Left colon (tissue), 2 donors: ENCODE measurements at regions of chr2 and their contacts with region 1.

Region 1: DNA sequence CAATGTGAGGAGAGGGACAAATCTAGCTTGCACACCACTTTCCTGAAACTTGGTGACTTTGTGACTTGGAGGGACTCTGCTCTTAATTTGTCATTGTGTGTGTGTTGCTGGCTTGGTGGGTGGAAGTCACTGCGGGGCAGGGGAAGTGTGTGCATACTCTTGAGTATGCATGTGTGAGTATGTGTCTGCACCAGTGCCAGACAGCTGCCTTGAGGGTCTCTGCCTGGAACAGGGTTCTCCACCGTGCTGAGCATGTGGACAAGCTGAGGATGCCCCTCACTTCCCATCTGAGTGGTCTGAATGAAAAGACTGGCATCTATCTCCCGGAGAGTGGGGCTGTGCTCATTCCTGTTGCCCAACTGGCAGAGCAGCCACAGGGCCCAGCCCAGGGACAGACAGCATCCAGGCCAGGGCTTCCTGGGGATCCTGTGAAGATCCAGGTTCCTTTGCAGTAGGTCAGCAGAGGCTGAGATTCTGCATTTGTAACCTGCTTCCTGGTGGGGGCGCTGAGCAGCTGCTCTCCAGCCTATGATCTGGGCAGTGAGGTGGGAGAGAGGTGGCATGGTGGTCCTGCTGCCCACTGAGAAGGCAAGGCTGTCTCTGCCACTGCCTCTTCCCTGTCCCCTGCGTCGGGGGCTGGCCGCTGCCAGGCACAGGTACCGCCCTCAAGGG is 138.9 kb upstream of the HAAO start:
- DNase-seq: peak in 1 of 2 donors; percentile 46
- ATAC-seq: peak; percentile 16

Region 2: DNA sequence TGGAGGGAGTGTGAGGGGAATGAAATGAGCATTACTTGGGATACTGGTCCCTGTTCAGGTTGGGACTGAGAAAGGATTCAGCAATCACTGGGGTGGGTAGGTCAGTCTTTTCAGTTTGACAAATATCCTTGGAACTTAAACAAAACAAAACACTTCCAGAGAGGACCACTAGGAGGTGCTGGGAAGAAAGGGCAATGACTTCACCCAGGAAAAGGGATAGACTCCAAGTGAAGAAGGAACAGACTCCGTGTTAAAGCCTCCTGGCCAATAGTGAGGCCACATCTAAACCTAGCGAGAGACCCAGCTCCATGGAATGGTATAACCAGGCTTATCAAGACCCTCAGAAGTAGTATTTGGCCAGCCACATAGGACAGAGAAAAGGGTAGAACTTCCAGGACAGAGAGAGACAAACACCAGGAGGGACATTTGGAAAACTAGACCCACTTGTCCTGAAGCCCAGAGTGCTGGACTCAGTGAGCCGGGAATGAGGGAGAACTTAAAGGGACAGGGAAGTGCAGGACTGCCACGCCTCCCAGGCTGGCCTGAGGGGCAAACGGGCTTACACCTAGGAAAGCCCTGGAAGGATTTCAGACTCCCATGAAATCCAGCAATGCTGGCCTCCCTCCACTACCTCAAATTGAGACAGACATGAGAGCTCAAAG is 417.9 kb before region 1 on chr2:
- intact Hi-C with region 1: no loop called
- DNase-seq: peak; percentile 26 to 28
- ATAC-seq: peak; percentile 95

Region 3: GRCh38 chr2:42835577-42836371 is 95.5 kb before region 1 on chr2:
- intact Hi-C with region 1: loop called (anchors 10 kb)
- DNase-seq: peak in 1 of 2 donors; percentile 37
- ATAC-seq: peak; percentile 6

Region 4: DNA sequence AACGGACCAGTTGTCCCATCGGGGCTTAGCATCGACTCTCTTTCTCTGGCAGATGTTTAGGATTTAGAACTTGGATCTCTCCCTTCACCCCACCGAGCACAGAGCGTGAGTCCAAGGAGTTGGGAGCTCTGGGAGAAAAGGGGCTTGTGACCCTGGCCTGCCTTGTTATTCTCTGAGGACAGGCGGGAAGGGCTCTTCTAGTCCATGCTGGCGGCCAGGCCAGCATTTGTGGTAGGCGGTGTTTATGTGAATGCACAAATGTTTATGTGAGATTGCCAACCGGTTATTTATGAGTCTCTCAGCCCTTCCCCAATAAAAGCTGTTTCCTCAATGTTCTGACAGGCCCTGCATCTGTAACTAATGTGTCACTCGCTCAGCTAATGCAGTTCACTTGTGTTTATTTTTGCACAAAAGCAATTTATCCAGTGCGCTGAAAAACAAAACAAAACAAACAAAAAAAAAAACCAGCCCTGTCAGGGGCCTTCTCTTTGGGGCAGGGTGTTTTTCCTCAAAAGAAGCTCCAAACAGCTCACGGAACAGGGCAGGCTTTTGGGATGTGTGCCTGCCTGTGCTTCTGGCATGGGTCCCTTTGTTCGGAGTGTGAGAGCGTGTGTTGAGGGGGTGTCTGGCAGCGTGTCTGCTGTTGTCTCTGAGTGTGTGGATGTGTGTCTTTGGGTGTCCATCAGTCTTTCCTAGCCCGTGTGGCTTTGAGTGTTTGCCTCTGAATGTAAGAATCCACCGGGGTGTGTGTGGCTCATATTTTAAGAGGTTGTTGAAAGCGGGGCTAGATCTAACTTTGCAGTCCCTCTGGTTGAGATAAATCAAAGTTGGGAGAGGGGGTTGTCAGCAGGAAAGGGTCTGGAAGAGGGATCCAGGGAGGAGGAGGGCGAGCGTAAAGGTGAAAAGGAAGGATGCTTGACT is 86.1 kb before region 1 on chr2:
- intact Hi-C with region 1: loop called in 1 of 2 experiments (anchors 10 kb)
- DNase-seq: peak; percentile 34 to 67
- ATAC-seq: peak; percentile 46

Region 5: DNA sequence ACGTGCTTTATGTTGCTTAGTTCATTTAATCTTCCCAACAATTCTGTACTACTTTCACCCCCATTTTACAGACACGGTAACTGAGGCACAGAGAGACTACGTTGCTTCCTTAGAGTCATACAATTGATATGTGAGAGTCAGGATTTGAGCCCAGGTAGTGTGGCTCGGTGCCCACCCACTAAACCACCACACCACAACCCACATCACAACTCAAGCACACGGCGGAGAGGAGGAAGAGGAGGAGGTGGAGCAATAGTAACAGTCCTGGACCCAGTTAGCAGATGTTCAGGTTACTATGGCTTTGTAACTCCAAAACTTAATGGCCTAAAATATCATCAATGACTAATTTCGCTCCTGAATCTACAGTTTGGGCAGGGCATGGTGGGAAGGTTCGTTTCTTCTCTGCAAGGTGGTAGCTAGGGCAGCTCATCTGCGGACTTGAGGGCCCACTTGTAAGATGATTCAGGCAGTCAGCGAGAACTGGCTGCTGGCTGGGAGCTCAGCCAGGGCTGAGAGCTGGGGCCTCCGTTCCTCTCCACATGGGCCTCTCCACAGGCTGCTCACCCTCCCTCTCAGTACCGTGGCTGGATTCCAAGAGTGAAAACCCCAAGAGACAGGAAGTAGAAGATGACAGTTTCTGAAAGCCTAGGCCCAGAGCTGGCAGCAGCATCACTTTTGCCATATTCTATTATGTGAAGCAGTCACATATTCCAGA is 128.1 kb after region 1 on chr2:
- intact Hi-C with region 1: no loop called
- DNase-seq: peak; percentile 47 to 76
- ATAC-seq: peak; percentile 54

Region 6: GRCh38 chr2:43169987-43170386 is 238.7 kb after region 1 on chr2:
- intact Hi-C with region 1: no loop called
- DNase-seq: peak; percentile 70 to 79
- ATAC-seq: peak; percentile 53